ENCODE measurements at regions of chr10 and their contacts with region 1.

Region 1: DNA sequence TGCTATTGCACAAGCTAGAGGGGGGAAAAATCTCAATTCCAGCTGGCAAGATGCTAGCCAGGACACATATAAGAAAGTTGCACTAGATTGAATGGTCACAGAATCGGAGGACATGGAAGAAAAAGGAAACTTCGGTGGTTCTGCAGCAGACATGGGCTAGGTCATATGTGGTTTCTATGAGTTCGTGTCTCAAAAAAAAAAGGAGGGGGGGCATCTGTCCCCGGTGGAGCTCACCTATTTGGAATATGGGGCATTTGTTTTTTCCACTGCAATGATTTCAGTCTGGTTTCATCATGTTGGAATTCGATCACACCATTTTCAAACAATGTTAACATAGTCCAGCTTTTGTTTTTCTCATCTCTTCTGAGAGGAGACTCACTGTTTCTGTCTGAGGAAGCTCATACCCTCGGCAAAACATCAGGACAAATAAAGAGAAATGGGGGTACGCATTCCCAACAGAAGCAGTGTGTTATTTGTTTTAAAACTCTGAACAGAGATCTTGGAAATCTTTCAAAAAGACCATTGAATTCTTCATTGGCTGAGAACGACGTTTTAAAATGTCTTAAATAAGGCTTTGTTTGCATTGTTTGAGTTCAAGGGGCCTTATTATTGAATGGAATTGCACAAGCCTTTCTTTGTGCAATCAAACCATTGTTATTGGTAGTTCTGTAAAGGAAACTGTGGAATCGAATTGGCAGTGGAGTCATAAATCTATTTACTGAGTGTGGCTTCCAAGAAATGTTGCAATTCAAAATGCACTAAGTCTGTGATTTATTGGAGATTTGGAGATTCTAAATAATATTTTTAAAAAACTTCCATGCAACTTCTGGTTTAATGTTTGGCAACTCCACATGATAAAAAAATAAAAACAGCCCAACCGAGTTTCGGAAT is 173.2 kb downstream of the RTKN2 start:
- DNase-seq: no peak
- H3K4me3 ChIP-seq: peak overlapping the region in 36 of 59 donors; percentile 0 to 51 (median 20)
- H3K27ac ChIP-seq: peak overlapping the region; percentile 20 to 91 (median 78)
- H3K27me3 ChIP-seq: no peaks in the 10 kb centered on the region
- CTCF ChIP-seq: peak in 1 of 56 donors; percentile 21

Region 2: DNA sequence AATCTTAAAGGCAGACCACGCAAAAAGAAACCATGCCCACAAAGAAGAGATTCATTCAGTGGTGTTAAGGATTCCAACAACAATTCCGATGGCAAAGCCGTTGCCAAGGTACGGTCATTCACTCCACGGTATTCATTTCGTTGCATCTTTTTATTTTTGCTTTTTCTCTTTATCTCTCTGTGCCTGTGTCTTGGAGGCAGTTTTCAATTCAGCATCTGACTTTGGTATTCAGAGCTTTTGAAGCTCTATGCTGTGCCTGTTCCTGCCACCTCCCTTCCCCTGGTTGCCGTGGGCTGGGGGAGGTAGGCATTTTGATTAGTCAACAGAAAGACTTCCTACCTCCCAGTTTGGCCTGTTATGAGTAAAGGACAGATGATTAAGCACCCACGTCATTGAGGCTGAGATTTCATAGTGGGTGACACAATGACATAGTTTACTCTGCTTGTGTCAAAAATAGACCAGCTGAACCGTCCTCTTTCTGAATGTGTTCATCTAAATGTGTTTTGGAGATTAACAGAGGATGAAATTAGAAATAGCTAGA is 44.5 kb before region 1 on chr10:
- intact Hi-C with region 1: loop called (anchors 2 to 5 kb)
- DNase-seq: peak in 3 of 10 donors; percentile 42 to 64 (median 52)
- H3K4me3 ChIP-seq: peak overlapping the region; percentile 44 to 88 (median 70)
- H3K27ac ChIP-seq: peak overlapping the region in 56 of 59 donors; percentile 67 to 99 (median 96)
- H3K27me3 ChIP-seq: no peaks in the 10 kb centered on the region
- CTCF ChIP-seq: peak in 1 of 56 donors; percentile 15

Measured in dorsolateral prefrontal cortex (tissue), 120 donors.